CD8-positive, alpha-beta T cell (primary cell): ENCODE measurements at regions of chr9 and their contacts with region 1.

Region 1: DNA sequence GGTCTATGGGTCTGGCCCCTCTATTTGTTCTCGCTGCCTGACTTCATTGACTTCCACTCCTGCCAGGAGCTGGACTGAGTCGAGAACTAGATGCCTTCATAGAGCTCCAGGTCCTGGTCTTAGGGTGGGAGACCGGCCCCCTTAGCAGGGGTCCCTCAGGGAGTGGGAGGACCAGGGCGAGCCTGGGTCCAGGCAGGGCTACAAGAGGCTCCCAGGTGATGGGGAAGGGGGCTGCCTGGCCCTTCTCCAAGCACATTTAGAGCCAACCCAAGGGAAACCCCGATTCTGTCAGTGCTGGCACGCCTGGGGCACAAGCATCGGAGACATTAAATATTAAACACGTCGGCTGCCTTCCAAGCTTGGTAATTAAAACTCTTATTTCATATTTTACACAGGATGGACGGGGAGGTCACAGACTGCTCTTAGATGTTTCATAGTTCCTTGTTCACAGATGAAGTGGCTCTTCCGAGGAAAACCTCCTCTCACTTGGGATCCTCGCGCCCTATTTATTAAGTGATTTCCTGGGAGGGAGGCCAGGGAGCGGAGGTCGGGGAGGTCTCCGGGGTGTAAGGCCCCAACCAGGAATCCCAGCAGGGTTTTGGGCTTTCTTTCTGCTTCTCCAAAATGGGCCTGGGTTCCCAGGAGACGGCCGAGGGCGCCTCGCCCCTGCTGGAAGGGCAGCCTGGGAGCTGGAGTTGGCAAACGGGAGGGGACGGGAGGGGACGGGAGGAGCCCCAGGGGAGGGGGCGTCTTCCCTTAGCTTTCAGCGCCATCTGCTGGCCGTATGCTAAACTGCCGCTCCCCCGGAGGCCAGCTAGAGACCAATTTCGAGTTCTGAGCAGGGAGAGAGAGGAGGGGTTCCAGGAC is 23.4 kb upstream of the ZBTB43 start:
- DNase-seq: peak; percentile 71 to 90 (median 82)
- ATAC-seq: peak; percentile 92
- H3K4me3 ChIP-seq: no peak overlapping the region
- H3K4me3 Mint-ChIP-seq: no peak overlapping the region
- H3K27ac ChIP-seq: no peak overlapping the region
- H3K27ac Mint-ChIP-seq: no peak overlapping the region
- H3K4me1 ChIP-seq: no peaks in the 10 kb centered on the region
- H3K4me1 Mint-ChIP-seq: no peaks in the 10 kb centered on the region
- H3K27me3 ChIP-seq: peaks cover 0 to 4% of the 10 kb centered on the region in 2 experiments
- H3K27me3 Mint-ChIP-seq: peaks cover 29% of the 10 kb centered on the region
- CTCF ChIP-seq: peak; percentile 91

Region 2: GRCh38 chr9:126611592-126612325 is 169.7 kb before region 1 on chr9:
- CTCF ChIA-PET with region 1: interaction called, 7 read pairs
- POLR2A ChIA-PET with region 1: no interaction called
- intact Hi-C with region 1: loop called in 1 of 2 experiments (anchors 1 kb)
- DNase-seq: peak; percentile 41 to 77 (median 67)
- ATAC-seq: peak; percentile 72
- H3K4me3 ChIP-seq: peak overlapping the region in 1 of 2 experiments; percentile 34
- H3K4me3 Mint-ChIP-seq: peak overlapping the region; percentile 72
- H3K27ac ChIP-seq: no peak overlapping the region
- H3K27ac Mint-ChIP-seq: no peak overlapping the region
- H3K4me1 ChIP-seq: peaks cover 26% of the 10 kb centered on the region
- H3K4me1 Mint-ChIP-seq: peaks cover 25% of the 10 kb centered on the region
- H3K27me3 ChIP-seq: peaks cover 32 to 38% of the 10 kb centered on the region in 2 experiments
- H3K27me3 Mint-ChIP-seq: peaks cover 60% of the 10 kb centered on the region
- CTCF ChIP-seq: peak; percentile 65

Region 3: DNA sequence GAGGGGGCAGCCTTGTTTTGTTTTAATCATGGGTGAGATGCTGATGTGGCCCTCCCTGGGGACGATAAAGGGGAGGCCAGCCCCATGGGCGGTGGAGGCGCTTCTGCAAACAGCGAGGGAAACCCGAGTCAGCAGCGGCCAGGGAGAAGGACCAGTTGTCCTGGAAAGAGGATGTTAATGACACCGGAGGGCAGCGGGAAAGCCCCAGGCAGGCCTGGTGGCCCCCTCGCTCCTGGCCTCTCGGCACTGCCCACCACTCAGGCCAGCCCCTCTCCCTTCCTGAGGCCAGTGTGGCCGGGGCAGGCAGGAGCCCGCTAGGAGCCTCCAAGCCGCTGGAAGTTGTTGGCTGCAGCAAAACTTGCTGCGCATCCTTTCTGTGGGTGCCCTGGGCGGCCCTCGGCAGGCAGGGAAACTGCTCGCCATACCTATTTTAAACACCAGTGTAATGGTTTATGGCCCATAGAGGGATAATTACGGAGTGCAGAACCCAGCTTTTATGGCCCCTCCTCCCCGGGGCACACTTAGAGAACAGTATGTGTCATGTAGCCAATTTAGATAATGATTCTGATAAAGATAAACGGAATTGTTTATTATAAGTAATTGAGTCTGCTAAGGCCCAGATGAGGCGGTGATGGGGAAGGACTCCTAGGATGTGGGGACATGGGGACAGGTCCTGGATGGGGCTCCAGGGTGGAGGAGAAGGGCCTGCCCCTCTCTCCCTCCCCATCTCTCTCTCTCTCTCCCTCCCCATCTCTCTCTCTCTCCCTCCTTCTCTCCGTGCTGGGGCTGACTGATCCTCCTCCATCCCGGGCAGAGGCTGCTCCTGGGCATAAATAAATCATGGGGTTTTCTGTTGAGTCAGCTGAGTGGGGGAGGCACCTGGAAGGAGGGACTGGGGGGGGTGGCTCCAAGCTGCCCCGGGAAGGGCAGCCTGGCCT is 130.7 kb before region 1 on chr9:
- CTCF ChIA-PET with region 1: no interaction called
- POLR2A ChIA-PET with region 1: no interaction called
- intact Hi-C with region 1: no loop called
- DNase-seq: no peak
- ATAC-seq: no peak
- H3K4me3 ChIP-seq: no peak overlapping the region
- H3K4me3 Mint-ChIP-seq: no peak overlapping the region
- H3K27ac ChIP-seq: no peak overlapping the region
- H3K27ac Mint-ChIP-seq: no peak overlapping the region
- H3K4me1 ChIP-seq: no peaks in the 10 kb centered on the region
- H3K4me1 Mint-ChIP-seq: no peaks in the 10 kb centered on the region
- H3K27me3 ChIP-seq: peaks cover 0 to 17% of the 10 kb centered on the region in 2 experiments
- H3K27me3 Mint-ChIP-seq: peaks cover 64% of the 10 kb centered on the region
- CTCF ChIP-seq: no peak

Region 4: DNA sequence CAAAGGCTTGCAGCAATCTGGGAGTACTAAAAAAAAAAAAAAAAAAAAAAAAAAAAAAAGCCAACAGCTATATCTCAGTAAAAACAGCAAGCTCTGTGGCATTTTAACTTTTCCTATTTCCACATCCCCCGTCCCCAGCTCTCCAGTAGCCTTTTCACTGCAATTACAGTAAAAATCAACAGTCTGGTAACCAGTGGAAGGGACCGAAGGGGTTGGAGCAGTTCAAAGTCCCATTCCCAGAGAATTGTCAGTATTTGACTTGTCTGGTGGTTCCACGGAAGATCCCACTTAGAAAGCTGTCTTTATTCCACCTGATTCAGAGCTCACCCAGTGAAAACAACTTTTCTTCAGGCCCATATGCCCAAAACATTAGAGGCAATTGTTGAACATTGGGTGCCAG is 48.4 kb before region 1 on chr9:
- CTCF ChIA-PET with region 1: interaction called, 24 read pairs
- POLR2A ChIA-PET with region 1: no interaction called
- intact Hi-C with region 1: no loop called
- DNase-seq: no peak
- ATAC-seq: no peak
- H3K4me3 ChIP-seq: no peak overlapping the region
- H3K4me3 Mint-ChIP-seq: no peak overlapping the region
- H3K27ac ChIP-seq: no peak overlapping the region
- H3K27ac Mint-ChIP-seq: no peak overlapping the region
- H3K4me1 ChIP-seq: no peaks in the 10 kb centered on the region
- H3K4me1 Mint-ChIP-seq: no peaks in the 10 kb centered on the region
- H3K27me3 ChIP-seq: peaks cover 0 to 2% of the 10 kb centered on the region in 2 experiments
- H3K27me3 Mint-ChIP-seq: no peaks in the 10 kb centered on the region
- CTCF ChIP-seq: no peak